ENCODE measurements at regions of chr12 and their contacts with region 1.

Region 1: DNA sequence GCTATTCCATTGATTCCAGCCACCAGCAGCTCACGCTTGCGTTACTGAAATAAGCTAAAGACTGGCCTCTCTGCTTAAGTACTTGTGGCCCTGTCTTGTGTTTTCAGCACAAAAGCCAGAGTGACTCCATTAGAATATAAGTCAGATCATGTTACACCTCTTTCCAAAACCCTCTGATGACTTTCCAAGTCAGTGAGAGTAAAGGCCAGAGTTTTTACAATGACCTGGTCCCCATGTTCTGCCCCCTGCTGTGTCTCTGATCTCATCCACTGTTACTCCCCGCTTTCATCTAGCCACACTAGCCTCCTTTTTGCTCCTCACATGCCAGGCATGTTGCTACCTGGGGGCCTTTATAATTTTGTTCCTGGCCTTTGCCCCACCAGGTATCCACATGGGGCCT is 6.9 kb upstream of the CKAP4 start:
- DNase-seq: no peak
- ATAC-seq: no peak
- H3K4me3 Mint-ChIP-seq: no peak overlapping the region
- H3K27ac Mint-ChIP-seq: no peak overlapping the region
- H3K4me1 Mint-ChIP-seq: peaks cover 19% of the 10 kb centered on the region
- H3K27me3 Mint-ChIP-seq: no peaks in the 10 kb centered on the region
- CTCF ChIP-seq: no peak

Region 2: DNA sequence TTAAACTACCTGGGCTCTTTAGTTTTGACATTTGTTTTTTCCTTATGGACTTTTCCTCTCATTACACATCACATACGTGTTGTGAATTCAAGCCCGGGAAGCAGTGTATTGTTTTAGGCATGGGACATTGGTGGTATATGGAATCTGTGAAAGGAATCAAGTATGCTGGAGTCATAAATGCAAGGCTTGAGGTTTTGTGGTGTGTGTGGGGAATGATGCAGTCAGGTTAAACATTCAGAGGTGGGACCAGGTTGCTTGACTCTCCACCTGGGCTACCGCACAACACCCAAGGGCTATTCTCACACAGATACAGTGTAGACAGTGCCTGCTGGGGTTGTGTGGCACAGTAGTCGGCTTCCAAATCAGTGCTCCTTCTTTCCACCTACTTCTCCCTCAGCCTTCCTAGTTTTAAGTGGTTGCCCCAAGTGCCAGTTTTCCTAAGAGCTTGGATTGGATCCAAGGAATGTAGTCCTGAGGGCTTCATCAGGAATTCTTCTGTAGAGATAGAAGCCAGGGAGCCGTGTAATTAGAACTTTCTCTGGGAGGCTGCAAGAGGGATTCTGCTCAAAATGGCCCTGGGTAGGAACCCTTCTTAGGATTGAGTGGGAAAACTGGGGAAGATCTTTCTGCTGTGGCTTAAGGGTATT is 680.5 kb before region 1 on chr12:
- CTCF ChIA-PET with region 1: no interaction called
- POLR2A ChIA-PET with region 1: no interaction called
- intact Hi-C with region 1: no loop called
- DNase-seq: no peak
- ATAC-seq: no peak
- H3K4me3 Mint-ChIP-seq: no peak overlapping the region
- H3K27ac Mint-ChIP-seq: no peak overlapping the region
- H3K4me1 Mint-ChIP-seq: no peaks in the 10 kb centered on the region
- H3K27me3 Mint-ChIP-seq: no peaks in the 10 kb centered on the region
- CTCF ChIP-seq: no peak

Region 3: DNA sequence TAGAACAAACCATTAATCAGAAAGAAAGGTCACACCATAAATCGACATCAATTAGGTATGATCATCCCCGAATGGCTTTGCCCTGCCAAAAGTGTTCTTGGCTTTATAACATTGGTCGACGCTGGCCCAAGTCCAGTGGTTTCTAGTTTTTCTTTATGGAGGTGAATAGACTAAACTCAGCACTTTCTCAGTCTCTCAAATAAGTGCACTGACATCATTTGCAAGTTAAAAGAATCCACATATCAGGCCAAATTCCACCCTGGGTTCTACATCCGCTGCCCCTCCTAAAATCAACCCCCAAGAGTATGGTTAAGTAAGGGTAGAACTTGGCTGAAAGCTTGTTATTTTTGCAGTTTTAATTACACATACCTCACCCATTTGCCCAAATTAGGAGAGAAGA is 610.0 kb before region 1 on chr12:
- CTCF ChIA-PET with region 1: no interaction called
- POLR2A ChIA-PET with region 1: no interaction called
- intact Hi-C with region 1: no loop called
- DNase-seq: no peak
- ATAC-seq: no peak
- H3K4me3 Mint-ChIP-seq: no peak overlapping the region
- H3K27ac Mint-ChIP-seq: no peak overlapping the region
- H3K4me1 Mint-ChIP-seq: no peaks in the 10 kb centered on the region
- H3K27me3 Mint-ChIP-seq: peaks cover 9% of the 10 kb centered on the region
- CTCF ChIP-seq: no peak

Region 4: GRCh38 chr12:105852951-105853350 is 401.8 kb before region 1 on chr12:
- CTCF ChIA-PET with region 1: no interaction called
- POLR2A ChIA-PET with region 1: no interaction called
- intact Hi-C with region 1: no loop called
- DNase-seq: no peak
- ATAC-seq: no peak
- H3K4me3 Mint-ChIP-seq: no peak overlapping the region
- H3K27ac Mint-ChIP-seq: no peak overlapping the region
- H3K4me1 Mint-ChIP-seq: no peaks in the 10 kb centered on the region
- H3K27me3 Mint-ChIP-seq: peaks cover 3% of the 10 kb centered on the region
- CTCF ChIP-seq: no peak

Region 5: DNA sequence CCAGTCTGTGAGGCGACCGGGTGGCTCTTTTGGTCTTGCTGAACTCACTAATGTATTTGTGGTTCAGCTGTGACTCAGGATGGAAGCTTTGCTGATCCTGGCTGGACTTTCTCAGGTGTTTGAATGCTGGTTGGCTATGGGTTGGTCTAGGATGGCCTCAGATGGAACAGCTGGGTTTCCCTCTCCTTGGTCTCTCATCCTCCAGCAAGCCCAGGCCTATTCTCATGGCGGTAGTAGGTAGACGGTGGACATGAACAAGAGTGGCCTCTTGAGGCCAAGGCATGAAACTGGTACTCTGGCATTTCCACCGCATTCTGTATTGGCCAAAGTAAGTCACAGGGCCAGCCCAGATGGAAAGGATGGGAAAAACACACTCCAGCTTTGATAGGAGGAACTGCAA is 91.0 kb after region 1 on chr12:
- CTCF ChIA-PET with region 1: no interaction called
- POLR2A ChIA-PET with region 1: interaction called, 10 read pairs
- intact Hi-C with region 1: no loop called
- DNase-seq: no peak
- ATAC-seq: peak; percentile 40
- H3K4me3 Mint-ChIP-seq: no peak overlapping the region
- H3K27ac Mint-ChIP-seq: no peak overlapping the region
- H3K4me1 Mint-ChIP-seq: no peaks in the 10 kb centered on the region
- H3K27me3 Mint-ChIP-seq: no peaks in the 10 kb centered on the region
- CTCF ChIP-seq: no peak

Measured in activated B cell treated with CpG ODN at 0.5 μM for 24 hours (primary cell).